ENCODE measurements at regions of chr1 and their contacts with region 1.

Region 1: GRCh38 chr1:201149400-201149799 is 4.9 kb downstream of the TMEM9 start:
- DNase-seq: no peak
- H3K4me3 ChIP-seq: no peak overlapping the region
- H3K27ac ChIP-seq: no peak overlapping the region
- H3K4me1 ChIP-seq: peaks cover 0 to 7% (median 2%) of the 10 kb centered on the region in 4 experiments; a peak in 2 of 7 replicates
- H3K27me3 ChIP-seq: no peaks in the 10 kb centered on the region
- CTCF ChIP-seq: peak in 2 of 3 experiments; percentile 50 to 63; a peak in 2 of 4 replicates
- EP300 ChIP-seq: no peak
- POLR2A ChIP-seq: no peak
- RAD21 ChIP-seq: peak; percentile 28 to 54; a peak in 3 of 4 replicates

Region 2: GRCh38 chr1:201026836-201027235 is 122.6 kb before region 1 on chr1:
- CTCF ChIA-PET with region 1: no interaction called
- POLR2A ChIA-PET with region 1: no interaction called
- DNase-seq: no peak
- H3K4me3 ChIP-seq: no peak overlapping the region
- H3K27ac ChIP-seq: no peak overlapping the region
- H3K4me1 ChIP-seq: peaks cover 5 to 29% (median 20%) of the 10 kb centered on the region in 4 experiments
- H3K27me3 ChIP-seq: peaks cover 0 to 5% (median under 1%) of the 10 kb centered on the region in 4 experiments; a peak in 2 of 7 replicates
- CTCF ChIP-seq: no peak
- EP300 ChIP-seq: no peak
- POLR2A ChIP-seq: no peak
- RAD21 ChIP-seq: no peak

Region 3: GRCh38 chr1:201137579-201138310 is 11.7 kb before region 1 on chr1:
- CTCF ChIA-PET with region 1: interaction called, 32 read pairs
- POLR2A ChIA-PET with region 1: interaction called, 28 read pairs
- DNase-seq: no peak
- H3K4me3 ChIP-seq: no peak overlapping the region
- H3K27ac ChIP-seq: no peak overlapping the region
- H3K4me1 ChIP-seq: no peaks in the 10 kb centered on the region
- H3K27me3 ChIP-seq: no peaks in the 10 kb centered on the region
- CTCF ChIP-seq: no peak
- EP300 ChIP-seq: no peak
- POLR2A ChIP-seq: no peak
- RAD21 ChIP-seq: no peak

Region 4: GRCh38 chr1:201170533-201171062 is 21.2 kb after region 1 on chr1:
- CTCF ChIA-PET with region 1: interaction called, 13 read pairs
- POLR2A ChIA-PET with region 1: interaction called, 105 read pairs
- DNase-seq: peak; percentile 60 to 86
- H3K4me3 ChIP-seq: peak overlapping the region; percentile 60 to 76 (median 72)
- H3K27ac ChIP-seq: no peak overlapping the region
- H3K4me1 ChIP-seq: peaks cover 5 to 10% (median 8%) of the 10 kb centered on the region in 4 experiments; a peak in 6 of 7 replicates
- H3K27me3 ChIP-seq: peaks cover 0 to 6% (median 4%) of the 10 kb centered on the region in 4 experiments; a peak in 3 of 7 replicates
- CTCF ChIP-seq: no peak
- EP300 ChIP-seq: no peak
- POLR2A ChIP-seq: no peak
- RAD21 ChIP-seq: no peak

Region 5: DNA sequence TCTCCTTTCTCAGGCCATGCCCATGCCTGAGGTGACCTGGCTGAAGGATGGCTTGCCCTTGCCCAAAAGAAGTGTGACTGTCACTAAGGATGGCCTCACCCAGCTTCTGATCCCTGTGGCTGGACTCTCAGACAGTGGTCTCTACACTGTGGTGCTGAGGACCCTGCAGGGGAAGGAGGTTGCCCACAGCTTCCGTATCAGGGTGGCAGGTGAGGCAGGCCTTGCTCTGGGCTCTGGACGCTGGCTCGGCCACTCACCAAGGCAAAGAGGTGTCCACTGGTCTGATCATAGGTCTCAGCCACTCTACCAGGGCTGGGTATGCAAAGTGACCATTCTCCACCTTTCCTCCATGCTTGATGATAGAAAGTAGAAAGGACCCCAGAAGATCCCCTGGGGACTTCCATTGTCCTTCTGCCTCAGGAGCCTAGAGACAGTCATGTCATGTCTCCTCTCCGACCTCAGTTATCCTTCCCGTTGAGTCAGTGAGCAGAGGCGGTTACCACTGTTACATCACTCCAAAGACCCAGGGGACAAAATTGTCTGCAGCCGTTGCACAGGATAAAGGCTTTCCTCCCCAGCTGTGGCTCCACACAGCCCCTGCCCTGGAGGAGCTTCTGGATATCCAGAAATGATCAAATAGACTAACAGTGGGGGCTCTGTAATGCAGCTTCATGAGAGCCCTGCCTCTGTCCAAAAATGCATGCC is 75.4 kb after region 1 on chr1:
- CTCF ChIA-PET with region 1: interaction called, 13 read pairs
- POLR2A ChIA-PET with region 1: interaction called, 4 read pairs
- DNase-seq: peak in 1 of 2 experiments; percentile 29
- H3K4me3 ChIP-seq: no peak overlapping the region
- H3K27ac ChIP-seq: no peak overlapping the region
- H3K4me1 ChIP-seq: no peaks in the 10 kb centered on the region
- H3K27me3 ChIP-seq: no peaks in the 10 kb centered on the region
- CTCF ChIP-seq: no peak
- EP300 ChIP-seq: no peak
- POLR2A ChIP-seq: no peak
- RAD21 ChIP-seq: no peak

Region 6: DNA sequence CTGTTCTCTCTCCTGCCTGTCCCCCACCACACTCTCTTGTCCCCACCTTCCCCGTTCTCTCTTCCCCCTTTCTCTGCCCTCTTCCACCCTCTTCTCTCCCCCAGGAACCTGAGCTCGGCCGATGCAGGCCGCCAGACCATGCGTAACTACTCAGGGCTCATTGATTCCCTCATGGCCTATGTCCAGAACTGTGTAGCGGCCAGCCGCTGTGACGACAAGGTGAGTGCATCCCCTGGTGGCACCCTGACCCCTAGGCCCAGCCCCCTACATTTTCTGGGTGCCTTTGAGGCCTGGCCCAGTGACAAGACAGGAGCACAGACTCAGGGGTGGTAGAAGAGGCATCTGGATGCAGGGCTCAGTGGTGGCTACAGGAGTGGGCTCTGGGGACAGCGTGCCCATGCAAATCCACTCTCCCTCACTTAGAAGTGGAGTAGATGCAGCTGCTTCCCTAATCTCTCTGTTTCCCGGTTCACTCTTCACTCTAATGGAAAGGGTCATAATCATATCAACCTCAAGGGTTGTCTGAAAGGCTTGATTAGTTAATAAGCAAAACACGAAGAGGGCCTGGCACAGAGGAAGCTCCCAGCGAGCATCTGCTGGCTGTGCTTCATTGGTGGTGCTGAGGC is 170.9 kb after region 1 on chr1:
- CTCF ChIA-PET with region 1: no interaction called
- POLR2A ChIA-PET with region 1: no interaction called
- DNase-seq: no peak
- H3K4me3 ChIP-seq: no peak overlapping the region
- H3K27ac ChIP-seq: no peak overlapping the region
- H3K4me1 ChIP-seq: no peaks in the 10 kb centered on the region
- H3K27me3 ChIP-seq: no peaks in the 10 kb centered on the region; a peak in 1 of 7 replicates
- CTCF ChIP-seq: no peak
- EP300 ChIP-seq: no peak
- POLR2A ChIP-seq: no peak
- RAD21 ChIP-seq: no peak

Measured in H1 (cell line).